ENCODE measurements at regions of chr2 and their contacts with region 1.

Region 1: DNA sequence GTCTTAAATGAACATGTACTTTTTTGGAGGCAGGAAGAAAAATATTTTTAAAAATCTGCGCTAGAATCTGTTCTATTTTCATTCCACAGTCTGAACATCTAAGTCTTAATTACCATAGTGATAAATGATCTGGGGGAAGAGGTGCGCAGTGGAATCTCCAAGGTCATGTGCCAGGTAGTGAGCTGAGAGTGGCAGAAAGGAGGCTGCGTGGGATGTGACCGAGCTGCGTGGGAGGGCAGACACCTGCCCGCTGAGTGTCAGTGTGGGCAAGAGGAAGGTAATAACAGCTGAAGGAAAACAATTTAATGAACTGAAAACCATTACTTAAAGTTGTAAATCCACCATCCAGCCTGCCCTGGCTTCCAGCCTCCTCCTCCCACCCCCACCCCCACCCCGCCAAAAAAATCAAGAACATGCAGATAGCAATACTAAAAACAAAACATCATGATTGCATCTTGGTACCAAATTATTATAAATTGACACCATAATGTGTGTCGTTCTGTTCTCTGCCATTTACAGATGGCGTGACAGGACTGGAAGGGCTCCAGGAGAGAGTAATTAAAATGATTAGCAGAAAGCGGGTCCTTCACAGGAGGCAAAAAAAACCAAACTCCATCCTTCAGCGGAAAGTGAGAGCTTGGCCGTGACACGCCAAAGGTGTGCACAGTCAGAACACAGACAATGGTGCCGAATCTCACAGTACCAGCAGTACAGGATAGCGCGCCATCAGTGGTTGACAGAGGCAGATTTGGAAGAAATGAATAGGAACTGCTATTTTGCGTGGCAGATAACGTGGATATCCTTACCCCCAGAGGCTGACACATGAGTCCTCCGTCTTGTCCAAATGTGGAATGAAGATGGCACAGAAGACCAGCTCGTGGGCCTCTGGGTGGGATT is 11.4 kb upstream of the DTNB start:
- DNase-seq: no peak

Region 2: DNA sequence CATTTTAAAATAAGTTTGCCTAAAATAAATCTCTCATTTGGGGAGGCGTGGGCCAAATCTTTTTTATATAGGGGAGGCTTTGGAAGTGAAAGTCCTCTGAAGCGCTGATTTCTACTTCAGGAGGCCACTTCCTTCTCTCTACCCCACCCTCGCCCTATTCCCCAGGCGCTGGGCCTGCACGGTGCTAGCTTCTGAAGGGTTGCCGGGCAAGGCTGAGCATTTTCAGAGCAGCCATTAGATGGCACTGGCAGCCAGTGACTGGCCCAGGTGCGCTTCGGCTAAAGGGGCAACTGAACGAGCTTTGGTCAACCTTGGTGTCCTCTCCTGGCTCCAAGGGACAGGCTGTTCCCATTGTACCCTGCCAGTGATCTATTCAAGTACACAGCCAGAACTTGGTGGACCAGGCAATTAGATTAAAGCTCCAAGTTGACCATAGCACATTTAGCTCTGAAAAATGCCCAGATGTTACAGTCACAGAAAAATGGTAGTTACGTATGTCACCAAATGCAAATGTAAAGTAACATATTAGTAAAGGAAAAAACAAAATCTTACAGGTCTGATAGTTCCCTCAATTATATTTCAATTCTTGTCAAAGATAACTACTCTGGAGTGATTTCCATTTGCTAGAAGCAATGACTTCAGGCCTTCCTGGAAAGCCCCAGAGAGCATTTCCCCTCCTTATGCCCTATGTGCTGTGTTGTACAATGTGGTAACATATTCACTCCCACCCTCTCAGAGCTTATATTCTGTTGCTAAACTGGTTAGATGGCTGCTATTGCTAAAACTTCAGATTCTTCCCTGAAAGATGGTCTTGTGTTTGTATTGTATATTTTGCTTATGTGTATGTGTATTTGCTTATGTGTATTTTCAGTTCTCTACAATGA is 518.6 kb before region 1 on chr2:
- intact Hi-C with region 1: no loop called
- DNase-seq: peak; percentile 83

Region 3: DNA sequence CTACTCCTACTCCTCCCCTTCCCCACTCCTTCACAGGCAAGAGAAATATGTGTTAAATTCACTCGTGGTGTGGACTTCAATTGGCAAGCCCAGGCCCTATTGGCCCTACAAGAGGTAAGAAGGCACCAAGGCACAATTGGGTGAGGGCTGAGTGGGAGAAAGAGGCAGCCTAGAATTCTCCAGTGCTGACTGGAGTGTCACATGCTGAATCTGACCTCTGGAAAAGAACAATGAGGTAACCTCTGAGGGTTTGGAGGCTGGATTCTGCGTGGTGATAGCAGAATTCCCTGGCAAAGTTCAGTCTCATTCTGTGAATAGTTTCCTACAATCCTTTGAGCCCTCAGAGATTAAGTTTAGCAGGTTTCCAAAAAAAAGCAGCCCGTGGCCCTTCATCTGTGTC is 1107.9 kb after region 1 on chr2:
- intact Hi-C with region 1: loop called in 1 of 2 experiments (anchors 5 kb)
- DNase-seq: no peak

Measured in posterior vena cava (tissue), 2 donors.